T-cell (primary cell): ENCODE measurements at regions of chr2 and their contacts with region 1.

Region 1: DNA sequence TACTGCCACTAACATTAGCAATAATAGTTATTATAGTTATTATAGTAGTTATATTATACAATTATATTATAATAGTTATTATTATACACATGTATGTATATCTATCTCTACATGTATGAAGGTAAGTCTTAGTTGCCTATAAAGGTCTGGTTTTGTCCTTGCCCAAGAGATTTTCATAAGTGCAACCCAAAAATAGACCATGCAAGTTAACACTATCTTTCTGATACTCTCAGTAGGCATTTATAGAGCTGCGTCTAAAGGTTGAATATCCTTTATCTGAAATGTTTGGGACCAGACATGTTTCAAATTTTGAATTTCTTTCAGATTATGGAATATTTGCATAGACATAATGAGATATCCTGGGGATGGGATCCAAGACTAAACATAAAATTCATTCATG is 175.4 kb downstream of the MEMO1 start:
- DNase-seq: no peak
- ATAC-seq: no peak
- H3K4me3 ChIP-seq: no peak overlapping the region
- H3K4me3 Mint-ChIP-seq: no peak overlapping the region
- H3K27ac ChIP-seq: no peak overlapping the region
- H3K27ac Mint-ChIP-seq: no peak overlapping the region
- H3K4me1 ChIP-seq: no peaks in the 10 kb centered on the region
- H3K4me1 Mint-ChIP-seq: no peaks in the 10 kb centered on the region
- H3K27me3 ChIP-seq: no peaks in the 10 kb centered on the region
- H3K27me3 Mint-ChIP-seq: no peaks in the 10 kb centered on the region

Region 2: GRCh38 chr2:31853521-31853920 is 18.1 kb after region 1 on chr2:
- CTCF ChIA-PET with region 1: no interaction called
- POLR2A ChIA-PET with region 1: no interaction called
- DNase-seq: no peak
- ATAC-seq: no peak
- H3K4me3 ChIP-seq: no peak overlapping the region
- H3K4me3 Mint-ChIP-seq: no peak overlapping the region
- H3K27ac ChIP-seq: no peak overlapping the region
- H3K27ac Mint-ChIP-seq: no peak overlapping the region
- H3K4me1 ChIP-seq: no peaks in the 10 kb centered on the region
- H3K4me1 Mint-ChIP-seq: no peaks in the 10 kb centered on the region
- H3K27me3 ChIP-seq: no peaks in the 10 kb centered on the region
- H3K27me3 Mint-ChIP-seq: no peaks in the 10 kb centered on the region

Region 3: GRCh38 chr2:32792416-32792815 is 957.0 kb after region 1 on chr2:
- CTCF ChIA-PET with region 1: no interaction called
- POLR2A ChIA-PET with region 1: interaction called in 1 of 2 experiments, 13 read pairs
- DNase-seq: no peak
- ATAC-seq: no peak
- H3K4me3 ChIP-seq: no peak overlapping the region
- H3K4me3 Mint-ChIP-seq: no peak overlapping the region
- H3K27ac ChIP-seq: no peak overlapping the region
- H3K27ac Mint-ChIP-seq: no peak overlapping the region
- H3K4me1 ChIP-seq: no peaks in the 10 kb centered on the region
- H3K4me1 Mint-ChIP-seq: no peaks in the 10 kb centered on the region
- H3K27me3 ChIP-seq: no peaks in the 10 kb centered on the region
- H3K27me3 Mint-ChIP-seq: no peaks in the 10 kb centered on the region